ENCODE measurements at regions of chr11 and their contacts with region 1.

Region 1: DNA sequence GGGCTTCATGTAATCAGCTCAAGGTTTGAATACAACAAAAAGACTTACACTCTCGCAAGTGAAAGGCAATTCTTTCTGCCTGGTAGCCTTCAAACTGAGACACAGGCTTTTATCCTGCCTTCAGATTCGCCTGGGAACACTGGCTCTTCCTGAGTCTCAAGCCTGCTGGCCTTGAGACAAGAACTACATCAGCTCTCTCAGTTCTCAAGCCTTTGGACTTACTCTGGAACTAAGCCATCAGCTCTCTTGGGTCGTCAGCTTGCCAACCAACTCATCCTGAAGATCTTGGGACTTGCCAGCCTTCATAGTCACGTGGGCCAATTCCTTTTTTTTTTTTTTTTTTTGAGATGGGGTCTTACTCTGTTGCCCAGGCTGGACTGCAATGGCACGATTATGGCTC is 35.7 kb upstream of the LRRC10B start:
- DNase-seq: no peak
- ATAC-seq: no peak
- H3K4me3 Mint-ChIP-seq: no peak overlapping the region
- H3K27ac Mint-ChIP-seq: peak overlapping the region in 5 of 10 donors; percentile 11 to 65 (median 35)
- H3K4me1 Mint-ChIP-seq: peaks cover 1 to 3% (median 2%) of the 10 kb centered on the region in 4 donors
- H3K27me3 Mint-ChIP-seq: no peaks in the 10 kb centered on the region

Region 2: GRCh38 chr11:61343792-61344745 is 128.8 kb before region 1 on chr11:
- POLR2A ChIA-PET with region 1: interaction called, 10 read pairs
- DNase-seq: peak in 1 of 10 donors; percentile 38
- ATAC-seq: no peak
- H3K4me3 Mint-ChIP-seq: no peak overlapping the region
- H3K27ac Mint-ChIP-seq: no peak overlapping the region
- H3K4me1 Mint-ChIP-seq: peaks cover 0 to 6% (median under 1%) of the 10 kb centered on the region in 4 donors
- H3K27me3 Mint-ChIP-seq: no peaks in the 10 kb centered on the region

Measured in naive thymus-derived CD8-positive, alpha-beta T cell (primary cell).